A673 (cell line): ENCODE measurements at regions of chr17 and their contacts with region 1.

Region 1: GRCh38 chr17:48618256-48618897 is 3.3 kb upstream of the HOXB8 start:
- DNase-seq: peak; percentile 93
- H3K4me3 ChIP-seq: peak overlapping the region; percentile 49
- H3K27ac ChIP-seq: no peak overlapping the region
- H3K4me1 ChIP-seq: peaks cover 17% of the 10 kb centered on the region
- H3K27me3 ChIP-seq: no peaks in the 10 kb centered on the region
- CTCF ChIP-seq: peak; percentile 98

Region 2: DNA sequence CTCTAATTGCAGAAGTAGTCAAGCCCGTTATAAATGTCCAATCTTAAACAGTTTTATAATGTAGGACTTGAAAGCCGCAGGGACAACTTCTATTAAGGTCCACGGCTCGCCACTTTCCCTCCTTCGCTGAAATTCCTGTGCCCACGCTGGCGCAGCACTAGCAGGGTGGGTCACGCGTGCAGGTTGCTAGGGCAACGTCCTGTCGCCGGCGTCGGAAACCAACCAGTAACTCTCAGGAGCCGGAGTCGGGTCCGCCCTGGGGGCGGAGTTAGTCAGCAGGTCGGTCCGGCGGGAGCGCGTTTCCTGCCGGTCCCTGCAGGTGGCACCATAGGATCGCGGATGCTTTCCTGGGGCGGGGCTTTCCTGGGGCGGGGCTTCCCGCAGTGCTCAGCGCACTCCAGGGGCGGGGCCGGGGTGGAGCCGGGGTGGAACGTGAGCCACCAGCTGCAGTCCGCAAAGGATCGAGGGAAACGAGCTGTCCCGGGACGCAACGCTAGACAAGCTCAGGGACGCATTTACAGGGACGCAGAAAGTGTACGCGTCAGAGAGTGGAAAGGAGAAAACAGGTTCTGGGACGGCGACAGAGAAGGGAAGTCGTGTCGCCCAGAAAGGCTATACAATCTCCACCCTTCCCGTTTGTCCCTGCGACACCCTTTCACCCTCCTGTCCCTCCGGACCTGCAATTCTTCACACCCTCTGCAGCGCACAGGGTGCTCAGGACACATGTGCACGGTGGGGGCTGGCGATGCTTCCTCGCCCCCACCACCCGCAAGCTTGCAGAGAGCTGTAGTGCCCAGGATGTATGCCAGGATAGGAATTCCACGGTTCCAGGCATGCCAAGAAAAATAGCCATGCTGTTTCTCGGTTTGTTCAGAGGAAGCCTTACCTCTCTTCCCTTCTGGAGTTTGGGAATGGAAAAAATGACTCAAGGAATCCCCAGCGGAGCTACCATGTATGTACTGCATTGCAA is 593.2 kb before region 1 on chr17:
- CTCF ChIA-PET with region 1: interaction called, 5 read pairs
- POLR2A ChIA-PET with region 1: no interaction called
- intact Hi-C with region 1: loop called (anchors 2 kb)
- DNase-seq: peak; percentile 99
- H3K4me3 ChIP-seq: peak overlapping the region; percentile 46
- H3K27ac ChIP-seq: peak overlapping the region; percentile 57
- H3K4me1 ChIP-seq: peaks cover 44% of the 10 kb centered on the region
- H3K27me3 ChIP-seq: no peaks in the 10 kb centered on the region
- CTCF ChIP-seq: peak; percentile 95

Region 3: DNA sequence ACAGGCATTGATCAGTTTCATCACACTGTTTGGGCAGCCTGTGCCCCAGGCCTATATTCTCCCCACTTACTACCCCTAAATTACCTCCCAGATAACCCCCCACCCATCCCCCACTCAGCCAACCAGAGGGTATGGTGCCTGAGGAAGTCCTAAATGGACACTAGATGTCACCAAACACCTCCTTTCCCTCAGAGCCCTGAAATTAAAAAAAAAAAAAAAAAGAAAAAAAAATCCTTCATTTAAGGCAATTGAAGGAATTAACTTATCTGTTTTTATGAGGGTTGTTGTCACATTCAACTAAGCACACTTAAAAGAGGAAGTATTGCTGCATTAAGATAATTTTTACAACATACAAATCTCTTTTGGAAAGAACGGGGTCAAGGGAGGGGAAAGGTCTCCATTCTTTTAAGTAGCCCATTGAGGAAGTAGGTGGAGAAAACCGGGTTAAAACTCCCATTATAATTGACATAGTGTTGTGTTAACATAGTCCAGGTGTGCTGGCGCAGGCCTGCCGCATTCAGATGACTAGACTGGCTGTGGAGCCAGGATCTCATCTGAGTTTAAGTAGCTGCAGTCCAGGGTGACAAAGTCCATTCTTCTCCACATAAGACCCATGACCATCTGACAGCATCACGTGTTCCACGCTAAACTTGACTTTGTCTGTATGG is 464.6 kb before region 1 on chr17:
- CTCF ChIA-PET with region 1: no interaction called
- POLR2A ChIA-PET with region 1: no interaction called
- intact Hi-C with region 1: loop called (anchors 5 kb)
- DNase-seq: peak; percentile 77
- H3K4me3 ChIP-seq: no peak overlapping the region
- H3K27ac ChIP-seq: no peak overlapping the region
- H3K4me1 ChIP-seq: peaks cover 36% of the 10 kb centered on the region
- H3K27me3 ChIP-seq: no peaks in the 10 kb centered on the region
- CTCF ChIP-seq: peak; percentile 83

Region 4: DNA sequence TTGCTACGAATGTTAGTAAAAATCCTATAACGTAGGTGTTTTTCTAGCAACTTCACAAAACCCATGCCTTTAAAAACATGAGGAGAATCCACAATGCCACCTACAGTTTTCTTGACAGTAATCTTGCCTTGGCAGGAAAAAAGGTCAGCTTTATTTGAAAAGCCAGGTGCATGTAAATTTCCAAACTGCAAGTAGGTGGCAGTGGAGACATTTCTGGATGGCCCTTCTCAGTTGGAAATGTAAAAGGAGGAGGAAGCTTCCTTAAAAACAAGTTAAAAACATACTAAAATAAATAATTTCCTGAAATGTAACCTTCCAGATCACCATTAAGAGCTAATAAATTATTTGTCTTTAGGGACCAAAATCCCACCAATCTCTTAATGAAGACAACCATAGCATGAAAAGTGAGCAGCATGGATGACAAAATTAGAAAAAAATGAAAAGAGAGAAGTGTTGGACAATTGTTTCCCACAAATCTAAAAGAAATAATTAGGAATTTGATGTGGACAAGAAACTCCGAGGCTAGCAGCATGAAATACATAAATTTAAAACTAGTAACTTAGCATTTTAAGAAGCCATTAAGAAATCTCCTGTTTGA is 358.6 kb before region 1 on chr17:
- CTCF ChIA-PET with region 1: interaction called, 3 read pairs
- POLR2A ChIA-PET with region 1: no interaction called
- intact Hi-C with region 1: loop called (anchors 5 kb)
- DNase-seq: peak; percentile 64
- H3K4me3 ChIP-seq: no peak overlapping the region
- H3K27ac ChIP-seq: no peak overlapping the region
- H3K4me1 ChIP-seq: peaks cover 39% of the 10 kb centered on the region
- H3K27me3 ChIP-seq: no peaks in the 10 kb centered on the region
- CTCF ChIP-seq: peak; percentile 69

Region 5: DNA sequence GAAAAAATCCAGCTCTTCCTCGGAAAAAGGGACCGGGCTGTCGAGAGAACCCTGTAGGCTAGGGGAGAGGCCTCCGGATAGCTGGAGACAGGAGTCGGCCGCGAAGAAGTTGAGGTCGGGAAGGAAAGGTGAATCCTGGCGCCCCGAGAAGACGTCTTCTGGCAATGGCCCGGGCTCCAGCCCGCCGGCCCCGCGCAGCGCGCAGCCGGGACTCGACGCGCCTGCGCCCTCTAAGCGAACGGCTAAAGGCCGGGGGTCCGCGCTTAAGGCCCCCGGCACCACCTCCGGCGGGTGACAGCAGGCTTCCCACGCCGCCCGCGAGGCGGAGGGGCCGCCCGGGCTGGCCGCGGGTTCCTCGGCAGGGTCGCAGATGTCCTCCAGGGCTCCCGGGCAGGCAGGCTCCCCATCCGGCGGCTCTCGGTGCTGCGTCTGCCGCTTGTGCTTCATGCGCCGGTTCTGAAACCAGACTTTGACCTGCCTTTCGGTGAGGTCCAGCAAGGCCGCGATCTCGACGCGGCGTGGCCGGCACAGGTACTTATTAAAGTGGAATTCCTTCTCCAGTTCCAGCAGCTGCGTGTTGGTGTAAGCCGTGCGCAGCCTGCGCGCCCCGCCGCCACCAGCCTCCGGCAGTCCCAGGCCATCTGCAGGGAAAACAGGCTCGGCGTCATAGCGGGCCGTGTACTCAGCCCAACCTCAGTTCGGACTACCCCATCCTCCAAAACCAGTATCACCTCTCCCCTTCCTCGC is 75.1 kb before region 1 on chr17:
- CTCF ChIA-PET with region 1: no interaction called
- POLR2A ChIA-PET with region 1: interaction called, 16 read pairs
- intact Hi-C with region 1: no loop called
- DNase-seq: peak; percentile 67
- H3K4me3 ChIP-seq: peak overlapping the region; percentile 85
- H3K27ac ChIP-seq: peak overlapping the region; percentile 95
- H3K4me1 ChIP-seq: peaks cover 38% of the 10 kb centered on the region
- H3K27me3 ChIP-seq: no peaks in the 10 kb centered on the region
- CTCF ChIP-seq: no peak; the same call in 1 of the 2 replicates

Region 6: GRCh38 chr17:48970224-48970623 is 351.8 kb after region 1 on chr17:
- CTCF ChIA-PET with region 1: no interaction called
- POLR2A ChIA-PET with region 1: no interaction called
- intact Hi-C with region 1: no loop called
- DNase-seq: peak; percentile 73
- H3K4me3 ChIP-seq: no peak overlapping the region
- H3K27ac ChIP-seq: no peak overlapping the region
- H3K4me1 ChIP-seq: peaks cover 16% of the 10 kb centered on the region
- H3K27me3 ChIP-seq: no peaks in the 10 kb centered on the region
- CTCF ChIP-seq: no peak